Naive thymus-derived CD8-positive, alpha-beta T cell (primary cell): ENCODE measurements at regions of chr1 and their contacts with region 1.

Region 1: DNA sequence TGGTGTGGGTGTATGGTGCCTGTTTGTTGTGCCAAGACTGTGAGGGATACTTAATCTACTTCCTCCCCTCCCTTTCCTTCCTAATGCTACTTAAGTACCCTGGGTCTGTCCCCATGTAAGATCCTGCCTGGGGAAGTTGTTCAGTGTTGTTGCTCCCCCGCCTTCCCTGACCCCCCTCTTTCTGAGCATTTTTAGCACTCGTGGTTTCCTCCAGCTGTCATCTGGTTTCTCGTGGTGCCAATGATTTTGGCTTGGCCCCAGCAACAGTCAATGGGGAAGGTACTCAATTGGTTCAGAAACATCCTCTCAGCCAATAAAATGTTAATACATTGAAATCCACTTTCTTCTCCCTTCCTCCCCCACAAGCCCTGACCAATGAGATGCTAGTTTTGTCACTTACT is 8.0 kb upstream of the B4GALT3 start:
- DNase-seq: peak; percentile 50 to 92 (median 83)
- ATAC-seq: peak; percentile 72 to 89
- H3K4me3 Mint-ChIP-seq: peak overlapping the region; percentile 74 to 91 (median 88)
- H3K27ac Mint-ChIP-seq: peak overlapping the region; percentile 89 to 100 (median 94)
- H3K4me1 Mint-ChIP-seq: peaks cover 44 to 88% (median 82%) of the 10 kb centered on the region in 4 donors
- H3K27me3 Mint-ChIP-seq: no peaks in the 10 kb centered on the region

Region 2: GRCh38 chr1:161153679-161154426 is 31.4 kb before region 1 on chr1 and contains the start of gene UFC1:
- POLR2A ChIA-PET with region 1: interaction called, 14 read pairs
- DNase-seq: peak; percentile 65 to 93 (median 84)
- ATAC-seq: peak; percentile 91 to 94
- H3K4me3 Mint-ChIP-seq: peak within 1 kb of the TSS; percentile 91 to 100 (median 98)
- H3K27ac Mint-ChIP-seq: peak within 1 kb of the TSS; percentile 99 to 100 (median 100)
- H3K4me1 Mint-ChIP-seq: peaks cover 15 to 39% (median 31%) of the 10 kb centered on the region in 4 donors
- H3K27me3 Mint-ChIP-seq: peaks cover 0 to 1% (median 0%) of the 10 kb centered on the region in 5 donors
- polyA plus RNA-seq, gene UFC1: 148 to 158 (median 155) TPM

Region 3: DNA sequence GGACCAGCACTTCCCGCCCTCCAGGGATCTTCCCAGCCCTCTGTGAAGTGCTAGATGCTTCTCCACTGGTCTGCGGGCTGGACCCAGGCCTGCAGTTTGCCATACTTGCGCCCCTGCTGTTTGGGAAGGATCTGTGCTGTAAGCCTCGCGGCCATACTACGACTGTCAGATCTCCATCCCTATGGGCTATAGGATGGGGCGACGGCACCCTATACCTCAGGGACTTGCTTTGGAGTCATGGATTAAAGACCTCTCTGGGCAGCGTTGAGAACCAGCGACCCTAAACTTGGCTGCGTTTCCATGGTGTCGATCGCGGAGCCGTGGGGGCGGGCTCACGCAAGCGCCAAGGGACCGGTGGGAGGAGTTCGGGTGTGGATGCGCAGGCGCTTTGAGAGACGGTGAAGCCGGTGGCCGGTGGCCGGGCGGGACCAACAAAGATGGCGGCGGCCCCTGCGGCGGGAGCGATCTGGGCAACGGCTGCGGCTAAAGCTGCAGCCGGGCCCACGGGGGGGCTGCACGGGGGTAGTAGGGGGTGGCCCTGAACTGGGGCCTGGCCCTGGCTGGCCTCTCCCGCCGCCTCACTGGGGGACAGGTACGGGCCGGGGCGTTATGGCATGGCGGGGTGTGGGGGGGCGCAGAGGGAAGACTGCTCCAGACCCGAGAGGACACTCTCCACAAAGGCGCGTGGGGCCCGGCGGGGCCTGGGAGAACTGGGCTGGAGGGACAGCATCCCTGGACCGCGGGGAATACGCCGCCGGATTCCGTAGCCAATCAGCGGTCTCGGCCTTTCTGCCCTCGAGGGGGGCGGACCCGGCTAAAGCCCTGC is 26.0 kb before region 1 on chr1 and contains the start of gene USP21:
- POLR2A ChIA-PET with region 1: interaction called, 154 read pairs
- DNase-seq: peak; percentile 85 to 95 (median 91)
- ATAC-seq: peak; percentile 89 to 90
- H3K4me3 Mint-ChIP-seq: peak within 1 kb of the TSS; percentile 88 to 97 (median 93)
- H3K27ac Mint-ChIP-seq: peak within 1 kb of the TSS; percentile 89 to 97 (median 96)
- H3K4me1 Mint-ChIP-seq: peaks cover 35 to 76% (median 66%) of the 10 kb centered on the region in 4 donors
- H3K27me3 Mint-ChIP-seq: no peaks in the 10 kb centered on the region
- polyA plus RNA-seq, gene USP21: 13.8 to 31.4 (median 14.6) TPM

Region 4: GRCh38 chr1:161216945-161217712 is 31.8 kb after region 1 on chr1:
- POLR2A ChIA-PET with region 1: interaction called, 28 read pairs
- DNase-seq: no peak
- ATAC-seq: peak; percentile 18 to 35
- H3K4me3 Mint-ChIP-seq: peak overlapping the region; percentile 57 to 89 (median 81)
- H3K27ac Mint-ChIP-seq: peak overlapping the region; percentile 90 to 97 (median 96)
- H3K4me1 Mint-ChIP-seq: peaks cover 45 to 72% (median 64%) of the 10 kb centered on the region in 4 donors
- H3K27me3 Mint-ChIP-seq: no peaks in the 10 kb centered on the region